IMR-90 (cell line): ENCODE measurements at regions of chrX and their contacts with region 1.

Region 1: DNA sequence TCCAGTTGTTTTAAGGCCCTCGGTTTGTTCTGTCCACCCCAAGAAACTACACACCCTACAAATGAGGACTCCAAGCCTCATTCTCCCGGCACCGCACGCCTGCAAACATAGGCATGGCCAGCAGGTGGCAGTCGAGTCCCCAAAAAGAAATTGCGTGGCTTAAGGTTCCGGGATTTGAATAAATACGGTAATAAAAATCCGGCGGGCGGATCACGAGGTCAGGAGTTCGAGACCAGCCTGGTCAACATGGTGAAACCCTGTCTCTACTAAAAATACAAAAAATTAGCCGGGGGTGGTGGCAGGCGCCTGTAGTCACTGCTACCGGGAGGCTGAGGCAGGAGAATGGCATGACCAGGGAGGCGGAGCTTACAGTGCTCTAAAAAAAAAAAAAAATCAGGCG is 21.8 kb upstream of the CSF2RA start:
- DNase-seq: no peak
- ATAC-seq: peak; percentile 85
- H3K4me3 ChIP-seq: no peak overlapping the region
- H3K27ac ChIP-seq: no peak overlapping the region
- H3K4me1 ChIP-seq: no peaks in the 10 kb centered on the region
- H3K27me3 ChIP-seq: no peaks in the 10 kb centered on the region
- CTCF ChIP-seq: peak; percentile 45
- POLR2A ChIP-seq: no peak
- RAD21 ChIP-seq: peak; percentile 25; the same call in 1 of the 2 replicates

Region 2: DNA sequence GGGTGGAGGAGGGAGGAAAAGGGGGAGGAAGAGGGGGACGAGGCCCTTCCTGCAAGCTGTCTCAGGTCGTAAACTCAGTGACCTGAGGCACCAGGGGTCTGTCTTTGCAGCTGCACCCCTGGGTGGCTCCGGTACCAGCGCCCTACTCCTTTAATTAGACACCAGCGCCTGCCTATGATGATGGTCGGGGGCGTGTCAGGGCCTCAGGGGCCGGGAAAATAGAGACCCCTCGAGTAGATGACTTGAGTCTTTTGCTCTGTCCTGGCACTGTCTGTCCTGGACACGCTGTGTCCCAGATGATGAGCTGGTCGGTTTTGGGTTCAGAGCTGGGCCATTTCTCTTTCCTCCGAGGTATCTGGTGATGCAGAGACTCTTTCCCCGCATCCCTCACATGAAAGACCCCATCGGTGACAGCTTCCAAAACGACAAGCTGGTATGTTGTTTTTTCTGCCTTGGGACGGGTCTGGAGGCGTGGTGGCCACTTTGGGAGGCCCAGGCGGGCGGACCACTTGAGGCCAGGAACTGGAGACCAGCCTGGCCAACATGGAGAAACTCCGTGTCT is 133.9 kb after region 1 on chrX:
- CTCF ChIA-PET with region 1: no interaction called
- POLR2A ChIA-PET with region 1: no interaction called
- dilution Hi-C with region 1: no loop called
- in situ Hi-C with region 1: no loop called
- intact Hi-C with region 1: loop called (anchors 5 kb)
- DNase-seq: no peak
- ATAC-seq: peak; percentile 10
- H3K4me3 ChIP-seq: no peak overlapping the region
- H3K27ac ChIP-seq: no peak overlapping the region
- H3K4me1 ChIP-seq: peaks cover 2% of the 10 kb centered on the region; the same call in 1 of the 2 replicates
- H3K27me3 ChIP-seq: no peaks in the 10 kb centered on the region
- CTCF ChIP-seq: no peak
- POLR2A ChIP-seq: no peak
- RAD21 ChIP-seq: no peak